CD4-positive, alpha-beta memory T cell (primary cell): ENCODE measurements at regions of chr12 and their contacts with region 1.

Region 1: GRCh38 chr12:89244536-89244935 is 107.8 kb downstream of the DUSP6 start:
- DNase-seq: peak; percentile 28 to 59 (median 49)
- H3K4me3 ChIP-seq: peak overlapping the region in 1 of 2 donors; percentile 21
- H3K4me3 Mint-ChIP-seq: peak overlapping the region; percentile 6 to 70 (median 50)
- H3K27ac ChIP-seq: no peak overlapping the region
- H3K27ac Mint-ChIP-seq: peak overlapping the region; percentile 13 to 73 (median 57)
- H3K4me1 ChIP-seq: peaks cover 30% of the 10 kb centered on the region
- H3K4me1 Mint-ChIP-seq: peaks cover 31 to 34% (median 33%) of the 10 kb centered on the region in 4 donors
- H3K27me3 ChIP-seq: no peaks in the 10 kb centered on the region
- H3K27me3 Mint-ChIP-seq: no peaks in the 10 kb centered on the region

Region 2: GRCh38 chr12:89051065-89051677 is 193.4 kb before region 1 on chr12:
- CTCF ChIA-PET with region 1: interaction called, 3 read pairs
- POLR2A ChIA-PET with region 1: no interaction called
- intact Hi-C with region 1: loop called (anchors 1 kb)
- DNase-seq: peak; percentile 35 to 60 (median 51)
- H3K4me3 ChIP-seq: no peak overlapping the region
- H3K4me3 Mint-ChIP-seq: no peak overlapping the region
- H3K27ac ChIP-seq: no peak overlapping the region
- H3K27ac Mint-ChIP-seq: no peak overlapping the region
- H3K4me1 ChIP-seq: no peaks in the 10 kb centered on the region
- H3K4me1 Mint-ChIP-seq: peaks cover 0 to 3% (median 1%) of the 10 kb centered on the region in 4 donors
- H3K27me3 ChIP-seq: no peaks in the 10 kb centered on the region
- H3K27me3 Mint-ChIP-seq: peaks cover 0 to 1% of the 10 kb centered on the region in 2 donors

Region 3: GRCh38 chr12:89225808-89226411 is 18.6 kb before region 1 on chr12:
- CTCF ChIA-PET with region 1: interaction called, 8 read pairs
- POLR2A ChIA-PET with region 1: interaction called, 14 read pairs
- intact Hi-C with region 1: loop called (anchors 2 kb)
- DNase-seq: no peak
- H3K4me3 ChIP-seq: no peak overlapping the region
- H3K4me3 Mint-ChIP-seq: peak overlapping the region in 6 of 8 donors; percentile 0 to 75 (median 56)
- H3K27ac ChIP-seq: no peak overlapping the region
- H3K27ac Mint-ChIP-seq: peak overlapping the region; percentile 7 to 85 (median 77)
- H3K4me1 ChIP-seq: peaks cover 23% of the 10 kb centered on the region
- H3K4me1 Mint-ChIP-seq: peaks cover 19 to 28% (median 25%) of the 10 kb centered on the region in 4 donors
- H3K27me3 ChIP-seq: no peaks in the 10 kb centered on the region
- H3K27me3 Mint-ChIP-seq: no peaks in the 10 kb centered on the region

Region 4: DNA sequence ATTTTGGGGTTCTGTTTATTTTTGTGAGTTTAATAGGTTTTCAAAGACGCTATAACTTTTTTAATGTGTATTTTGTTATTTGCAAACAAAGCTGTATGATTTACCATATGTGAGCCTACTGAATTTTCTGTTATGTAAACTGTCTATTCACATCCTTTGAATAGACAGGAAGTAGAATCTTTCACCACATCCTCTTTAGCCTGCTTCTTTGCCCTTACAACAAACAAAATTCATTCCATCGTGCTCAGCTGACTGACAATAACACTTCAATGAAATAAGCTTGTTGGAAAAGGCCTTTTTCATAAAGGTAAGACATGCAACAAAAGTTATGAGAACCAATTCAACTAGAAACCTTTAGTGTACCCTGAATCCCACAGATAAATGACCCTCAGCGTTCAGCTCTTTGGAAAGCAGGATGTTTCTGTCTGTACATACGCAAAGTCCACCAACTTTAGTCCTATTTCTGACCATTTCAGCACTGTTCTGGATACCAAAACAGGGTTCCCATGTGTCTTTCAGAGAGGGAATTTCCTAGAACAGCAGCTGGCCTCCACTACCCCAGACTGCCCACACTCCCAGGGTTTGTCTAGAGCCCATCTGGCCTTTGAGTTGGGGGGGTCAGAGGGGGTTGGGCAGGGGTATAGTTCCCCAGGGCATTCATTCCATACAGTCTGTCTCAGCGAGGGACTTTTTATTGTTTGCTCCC is 36.5 kb after region 1 on chr12:
- CTCF ChIA-PET with region 1: interaction called, 3 read pairs
- POLR2A ChIA-PET with region 1: interaction called, 7 read pairs
- intact Hi-C with region 1: loop called (anchors 2 kb)
- DNase-seq: peak in 4 of 5 donors; percentile 9 to 66 (median 44)
- H3K4me3 ChIP-seq: peak overlapping the region; percentile 0 to 4
- H3K4me3 Mint-ChIP-seq: peak overlapping the region in 7 of 8 donors; percentile 9 to 78 (median 65)
- H3K27ac ChIP-seq: no peak overlapping the region
- H3K27ac Mint-ChIP-seq: peak overlapping the region in 6 of 7 donors; percentile 22 to 78 (median 60)
- H3K4me1 ChIP-seq: peaks cover 26% of the 10 kb centered on the region
- H3K4me1 Mint-ChIP-seq: peaks cover 6 to 47% (median 18%) of the 10 kb centered on the region in 4 donors
- H3K27me3 ChIP-seq: no peaks in the 10 kb centered on the region
- H3K27me3 Mint-ChIP-seq: no peaks in the 10 kb centered on the region

Region 5: GRCh38 chr12:89477633-89478279 is 233.2 kb after region 1 on chr12:
- CTCF ChIA-PET with region 1: no interaction called
- POLR2A ChIA-PET with region 1: no interaction called
- intact Hi-C with region 1: no loop called
- DNase-seq: peak in 1 of 5 donors; percentile 12
- H3K4me3 ChIP-seq: no peak overlapping the region
- H3K4me3 Mint-ChIP-seq: peak overlapping the region in 7 of 8 donors; percentile 3 to 65 (median 33)
- H3K27ac ChIP-seq: no peak overlapping the region
- H3K27ac Mint-ChIP-seq: peak overlapping the region; percentile 10 to 81 (median 67)
- H3K4me1 ChIP-seq: peaks cover 23% of the 10 kb centered on the region
- H3K4me1 Mint-ChIP-seq: peaks cover 15 to 34% (median 26%) of the 10 kb centered on the region in 4 donors
- H3K27me3 ChIP-seq: no peaks in the 10 kb centered on the region
- H3K27me3 Mint-ChIP-seq: no peaks in the 10 kb centered on the region

Region 6: GRCh38 chr12:89556976-89557375 is 312.4 kb after region 1 on chr12:
- CTCF ChIA-PET with region 1: no interaction called
- POLR2A ChIA-PET with region 1: no interaction called
- intact Hi-C with region 1: no loop called
- DNase-seq: no peak
- H3K4me3 ChIP-seq: no peak overlapping the region
- H3K4me3 Mint-ChIP-seq: no peak overlapping the region
- H3K27ac ChIP-seq: no peak overlapping the region
- H3K27ac Mint-ChIP-seq: no peak overlapping the region
- H3K4me1 ChIP-seq: no peaks in the 10 kb centered on the region
- H3K4me1 Mint-ChIP-seq: peaks cover 0 to 4% (median 0%) of the 10 kb centered on the region in 4 donors
- H3K27me3 ChIP-seq: no peaks in the 10 kb centered on the region
- H3K27me3 Mint-ChIP-seq: peaks cover 0 to 3% of the 10 kb centered on the region in 2 donors